Ovary (tissue), 10 donors: ENCODE measurements at regions of chr12 and their contacts with region 1.

Region 1: GRCh38 chr12:21773263-21773741 is 1.2 kb downstream of the KCNJ8 start:
- DNase-seq: peak; percentile 52 to 70 (median 58)
- H3K4me3 ChIP-seq: peak overlapping the region; percentile 63
- H3K27ac ChIP-seq: peak overlapping the region in 1 of 2 donors; percentile 81
- H3K4me1 ChIP-seq: no peaks in the 10 kb centered on the region
- H3K27me3 ChIP-seq: no peaks in the 10 kb centered on the region
- CTCF ChIP-seq: peak in 1 of 3 donors; percentile 23
- EP300 ChIP-seq: no peak
- POLR2A ChIP-seq: no peak

Region 2: DNA sequence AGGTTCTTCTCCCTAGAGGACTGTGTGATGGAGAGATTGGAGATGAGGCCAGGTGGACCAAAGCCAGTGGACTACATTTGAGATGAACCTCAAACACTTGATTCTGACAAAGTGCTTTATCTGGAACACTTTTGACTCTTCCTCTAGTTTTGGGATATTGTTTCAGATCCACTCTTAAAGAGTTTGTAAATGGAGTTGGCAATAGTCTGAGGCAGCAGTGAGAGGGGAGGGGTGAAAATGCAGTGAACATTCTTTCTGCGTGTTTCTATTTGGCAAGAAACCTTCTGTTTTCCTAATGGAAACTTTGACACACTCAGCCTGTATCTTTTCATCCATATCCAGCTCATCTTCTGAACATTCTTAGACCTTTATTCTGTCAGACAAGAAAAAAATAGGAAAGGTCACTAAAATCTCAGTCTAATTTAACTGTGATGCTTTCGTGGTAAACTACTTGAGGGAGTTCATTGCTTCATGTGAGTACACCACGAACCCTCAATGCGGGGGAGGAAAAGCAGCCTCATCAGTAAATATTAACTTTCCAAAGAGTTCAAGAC is 58.6 kb after region 1 on chr12:
- intact Hi-C with region 1: loop called in 2 of 4 experiments (anchors 10 kb)
- DNase-seq: peak; percentile 30 to 69 (median 56)
- H3K4me3 ChIP-seq: no peak overlapping the region
- H3K27ac ChIP-seq: peak overlapping the region; percentile 16 to 54
- H3K4me1 ChIP-seq: peaks cover 18% of the 10 kb centered on the region
- H3K27me3 ChIP-seq: no peaks in the 10 kb centered on the region
- CTCF ChIP-seq: no peak
- EP300 ChIP-seq: no peak
- POLR2A ChIP-seq: no peak